ENCODE measurements at regions of chr12 and their contacts with region 1.

Region 1: GRCh38 chr12:94149119-94149780 is 873 bp downstream of the PLXNC1 start:
- DNase-seq: peak; percentile 54
- H3K4me3 Mint-ChIP-seq: peak overlapping the region; percentile 82
- H3K27ac Mint-ChIP-seq: no peak overlapping the region
- H3K4me1 Mint-ChIP-seq: peaks cover 19% of the 10 kb centered on the region
- H3K27me3 Mint-ChIP-seq: peaks cover 11% of the 10 kb centered on the region

Region 2: GRCh38 chr12:94133964-94134795 is 15.1 kb before region 1 on chr12:
- CTCF ChIA-PET with region 1: interaction called, 13 read pairs
- POLR2A ChIA-PET with region 1: no interaction called
- intact Hi-C with region 1: no loop called
- DNase-seq: peak; percentile 31
- H3K4me3 Mint-ChIP-seq: no peak overlapping the region
- H3K27ac Mint-ChIP-seq: no peak overlapping the region
- H3K4me1 Mint-ChIP-seq: peaks cover 2% of the 10 kb centered on the region
- H3K27me3 Mint-ChIP-seq: no peaks in the 10 kb centered on the region

Region 3: DNA sequence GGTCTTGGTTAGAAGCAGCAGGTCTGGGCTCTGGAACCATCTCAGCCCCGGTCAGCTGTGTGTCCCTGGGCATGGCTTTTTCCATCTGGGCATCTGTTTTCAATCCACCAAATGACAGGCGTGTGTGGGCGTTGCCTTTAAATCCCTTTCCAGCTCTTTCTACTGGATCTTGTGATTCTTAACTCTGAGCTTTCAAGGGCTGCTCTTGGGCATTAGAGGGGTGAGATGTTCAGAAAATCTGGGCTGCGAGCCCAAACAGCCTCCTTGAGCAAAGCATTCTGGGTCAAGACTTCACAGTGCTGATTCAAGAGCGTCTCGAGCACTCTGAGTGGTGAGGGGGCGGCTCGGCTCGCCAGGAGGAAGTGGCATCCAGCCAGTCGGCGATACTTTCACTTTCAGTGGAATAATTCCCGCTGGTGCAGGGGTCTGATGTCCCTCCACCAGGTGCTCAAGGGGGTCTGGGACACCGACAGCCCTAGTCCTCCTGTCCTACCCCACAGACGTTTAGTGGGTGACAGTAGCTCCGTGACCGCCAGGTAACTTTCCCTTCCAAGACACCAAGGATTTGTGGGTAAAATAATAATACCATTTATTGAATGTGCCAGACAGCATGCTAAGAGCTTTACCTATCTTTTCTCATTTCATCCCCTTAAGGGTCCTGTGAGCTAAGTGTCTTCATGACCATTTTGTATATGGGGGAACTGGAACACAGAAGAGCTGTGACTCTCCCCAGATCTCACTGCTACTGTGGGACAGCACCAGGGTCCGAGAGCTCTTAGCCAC is 113.2 kb after region 1 on chr12:
- CTCF ChIA-PET with region 1: interaction called, 3 read pairs
- POLR2A ChIA-PET with region 1: interaction called, 3 read pairs
- intact Hi-C with region 1: loop called (anchors 1 kb)
- DNase-seq: peak; percentile 85
- H3K4me3 Mint-ChIP-seq: peak overlapping the region; percentile 88
- H3K27ac Mint-ChIP-seq: peak overlapping the region; percentile 98
- H3K4me1 Mint-ChIP-seq: peaks cover 37% of the 10 kb centered on the region
- H3K27me3 Mint-ChIP-seq: no peaks in the 10 kb centered on the region

Region 4: DNA sequence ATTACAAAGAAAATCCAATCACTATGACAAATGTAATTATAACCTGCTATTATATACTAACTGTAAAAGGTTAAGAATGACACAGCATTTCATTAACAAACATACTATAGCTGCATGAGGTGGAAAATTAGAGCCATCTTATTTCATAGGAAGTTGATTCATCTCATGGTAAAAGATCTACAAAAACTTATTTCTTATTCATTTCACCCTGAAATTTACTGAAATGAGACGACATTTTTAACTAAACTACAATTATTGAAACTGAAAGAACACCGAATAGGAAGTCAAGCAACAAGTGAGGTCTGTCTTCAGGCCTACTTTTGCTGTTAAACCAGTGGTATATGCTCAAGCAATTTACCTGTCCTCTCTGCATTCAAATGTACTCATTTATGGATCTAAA is 223.2 kb after region 1 on chr12:
- CTCF ChIA-PET with region 1: no interaction called
- POLR2A ChIA-PET with region 1: no interaction called
- intact Hi-C with region 1: loop called (anchors 1 kb)
- DNase-seq: no peak
- H3K4me3 Mint-ChIP-seq: no peak overlapping the region
- H3K27ac Mint-ChIP-seq: peak overlapping the region; percentile 80
- H3K4me1 Mint-ChIP-seq: peaks cover 40% of the 10 kb centered on the region
- H3K27me3 Mint-ChIP-seq: no peaks in the 10 kb centered on the region

Region 5: GRCh38 chr12:94459728-94460615 is 310.7 kb after region 1 on chr12 and contains the start of gene CEP83:
- CTCF ChIA-PET with region 1: no interaction called
- POLR2A ChIA-PET with region 1: no interaction called
- intact Hi-C with region 1: loop called (anchors 2 kb)
- DNase-seq: peak; percentile 98
- H3K4me3 Mint-ChIP-seq: peak within 1 kb of the TSS; percentile 82
- H3K27ac Mint-ChIP-seq: peak within 1 kb of the TSS; percentile 92
- H3K4me1 Mint-ChIP-seq: peaks cover 31% of the 10 kb centered on the region
- H3K27me3 Mint-ChIP-seq: peaks cover 7% of the 10 kb centered on the region
- total RNA-seq, gene CEP83: 23.4 TPM

Region 6: GRCh38 chr12:94649349-94650142 is 500.3 kb after region 1 on chr12:
- CTCF ChIA-PET with region 1: no interaction called
- POLR2A ChIA-PET with region 1: no interaction called
- intact Hi-C with region 1: loop called (anchors 10 kb)
- DNase-seq: peak; percentile 29
- H3K4me3 Mint-ChIP-seq: peak overlapping the region; percentile 65
- H3K27ac Mint-ChIP-seq: no peak overlapping the region
- H3K4me1 Mint-ChIP-seq: peaks cover 13% of the 10 kb centered on the region
- H3K27me3 Mint-ChIP-seq: peaks cover 56% of the 10 kb centered on the region